Caco-2 (cell line): ENCODE measurements at regions of chr16 and their contacts with region 1.

Region 1: GRCh38 chr16:31873556-31874365 is at the start of gene ZNF267:
- DNase-seq: peak; percentile 93
- H3K4me3 ChIP-seq: peak within 1 kb of the TSS; percentile 93
- H3K4me3 Mint-ChIP-seq: peak within 1 kb of the TSS; percentile 91
- H3K27ac Mint-ChIP-seq: peak within 1 kb of the TSS; percentile 96
- H3K4me1 ChIP-seq: peaks cover 24% of the 10 kb centered on the region
- H3K4me1 Mint-ChIP-seq: peaks cover 12% of the 10 kb centered on the region
- H3K27me3 ChIP-seq: no peaks in the 10 kb centered on the region
- H3K27me3 Mint-ChIP-seq: no peaks in the 10 kb centered on the region
- CTCF ChIP-seq: no peak
- total RNA-seq, gene ZNF267: 25.5 and 25.8 TPM in 2 replicates

Region 2: GRCh38 chr16:31713071-31713944 is 160.5 kb before region 1 on chr16:
- CTCF ChIA-PET with region 1: no interaction called
- POLR2A ChIA-PET with region 1: interaction called, 16 read pairs
- intact Hi-C with region 1: loop called (anchors 2 kb)
- DNase-seq: peak; percentile 93 to 94
- H3K4me3 ChIP-seq: peak overlapping the region; percentile 77
- H3K4me3 Mint-ChIP-seq: peak overlapping the region; percentile 99
- H3K27ac Mint-ChIP-seq: peak overlapping the region; percentile 100
- H3K4me1 ChIP-seq: no peaks in the 10 kb centered on the region
- H3K4me1 Mint-ChIP-seq: peaks cover 12% of the 10 kb centered on the region
- H3K27me3 ChIP-seq: no peaks in the 10 kb centered on the region
- H3K27me3 Mint-ChIP-seq: no peaks in the 10 kb centered on the region
- CTCF ChIP-seq: no peak

Region 3: GRCh38 chr16:31861455-31861854 is 12.3 kb before region 1 on chr16:
- CTCF ChIA-PET with region 1: interaction called, 3 read pairs
- POLR2A ChIA-PET with region 1: no interaction called
- intact Hi-C with region 1: loop called (anchors 1 kb)
- DNase-seq: no peak
- H3K4me3 ChIP-seq: no peak overlapping the region
- H3K4me3 Mint-ChIP-seq: no peak overlapping the region
- H3K27ac Mint-ChIP-seq: no peak overlapping the region
- H3K4me1 ChIP-seq: no peaks in the 10 kb centered on the region
- H3K4me1 Mint-ChIP-seq: no peaks in the 10 kb centered on the region
- H3K27me3 ChIP-seq: no peaks in the 10 kb centered on the region; the same call in 1 of the 2 replicates
- H3K27me3 Mint-ChIP-seq: peaks cover 14% of the 10 kb centered on the region
- CTCF ChIP-seq: no peak